Caco-2 (cell line): ENCODE measurements at regions of chr4 and their contacts with region 1.

Region 1: GRCh38 chr4:83034630-83035494 is at the start of gene COPS4:
- DNase-seq: peak; percentile 97 to 98
- H3K4me3 ChIP-seq: peak within 1 kb of the TSS; percentile 80
- H3K4me3 Mint-ChIP-seq: peak within 1 kb of the TSS; percentile 98
- H3K27ac Mint-ChIP-seq: peak within 1 kb of the TSS; percentile 97
- H3K4me1 ChIP-seq: peaks cover 4% of the 10 kb centered on the region; the same call in 1 of the 2 replicates
- H3K4me1 Mint-ChIP-seq: no peaks in the 10 kb centered on the region
- H3K27me3 ChIP-seq: no peaks in the 10 kb centered on the region; the same call in 1 of the 2 replicates
- H3K27me3 Mint-ChIP-seq: no peaks in the 10 kb centered on the region
- CTCF ChIP-seq: peak; percentile 24 to 43
- total RNA-seq, gene COPS4: 34.5 and 36.3 TPM in 2 replicates

Region 2: GRCh38 chr4:82614843-82615449 is 419.9 kb before region 1 on chr4:
- CTCF ChIA-PET with region 1: no interaction called
- POLR2A ChIA-PET with region 1: interaction called, 10 read pairs
- intact Hi-C with region 1: no loop called
- DNase-seq: no peak
- H3K4me3 ChIP-seq: no peak overlapping the region
- H3K4me3 Mint-ChIP-seq: no peak overlapping the region
- H3K27ac Mint-ChIP-seq: no peak overlapping the region
- H3K4me1 ChIP-seq: peaks cover 5% of the 10 kb centered on the region; the same call in 1 of the 2 replicates
- H3K4me1 Mint-ChIP-seq: peaks cover 7% of the 10 kb centered on the region
- H3K27me3 ChIP-seq: no peaks in the 10 kb centered on the region
- H3K27me3 Mint-ChIP-seq: no peaks in the 10 kb centered on the region
- CTCF ChIP-seq: no peak

Region 3: DNA sequence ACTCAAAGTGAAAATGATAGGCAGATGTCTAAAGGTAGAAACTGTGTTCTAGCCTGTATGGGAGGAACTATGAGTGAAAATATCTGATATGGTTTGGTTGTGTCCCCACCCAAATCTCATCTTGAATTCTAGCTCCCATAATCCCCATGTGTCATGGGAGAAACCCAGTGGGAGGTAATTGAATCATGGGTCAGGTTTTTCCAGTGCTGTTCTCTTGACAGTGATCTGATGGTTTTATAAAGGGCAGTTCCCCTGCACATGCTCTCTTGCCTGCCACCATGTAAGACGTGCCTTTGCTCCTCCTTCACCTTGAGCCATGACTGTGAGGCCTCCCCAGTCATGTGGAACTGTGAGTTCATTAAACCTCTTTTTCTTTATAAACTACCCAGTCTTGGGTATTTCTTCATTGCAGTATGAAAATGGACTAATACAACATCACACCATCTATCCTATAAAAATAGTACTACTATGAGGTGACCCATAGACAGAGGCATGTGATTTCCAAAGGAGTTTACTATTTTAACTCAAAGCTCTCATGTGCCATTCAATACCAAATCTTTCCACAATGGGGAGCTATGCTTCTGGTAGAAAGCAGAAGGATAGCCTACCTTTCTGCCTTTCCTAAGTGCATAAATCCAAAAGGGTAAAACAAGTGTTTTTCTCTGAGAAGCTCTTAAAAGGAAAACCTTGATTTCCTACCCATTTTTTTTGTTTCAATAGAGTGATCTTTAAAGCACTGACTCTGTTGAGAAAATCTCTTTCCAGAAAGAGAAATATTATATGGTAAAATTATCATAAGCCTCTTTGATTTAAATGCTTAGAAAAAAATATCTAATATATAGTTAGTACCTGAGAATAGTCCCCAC is 182.7 kb before region 1 on chr4:
- CTCF ChIA-PET with region 1: interaction called, 5 read pairs
- POLR2A ChIA-PET with region 1: no interaction called
- intact Hi-C with region 1: loop called (anchors 5 kb)
- DNase-seq: peak in 1 of 2 experiments; percentile 47
- H3K4me3 ChIP-seq: no peak overlapping the region
- H3K4me3 Mint-ChIP-seq: no peak overlapping the region
- H3K27ac Mint-ChIP-seq: peak overlapping the region; percentile 57
- H3K4me1 ChIP-seq: no peaks in the 10 kb centered on the region
- H3K4me1 Mint-ChIP-seq: no peaks in the 10 kb centered on the region
- H3K27me3 ChIP-seq: no peaks in the 10 kb centered on the region
- H3K27me3 Mint-ChIP-seq: no peaks in the 10 kb centered on the region
- CTCF ChIP-seq: peak; percentile 28 to 60

Region 4: GRCh38 chr4:83054928-83055327 is 20.1 kb after region 1 on chr4:
- CTCF ChIA-PET with region 1: no interaction called
- POLR2A ChIA-PET with region 1: no interaction called
- intact Hi-C with region 1: no loop called
- DNase-seq: no peak
- H3K4me3 ChIP-seq: no peak overlapping the region
- H3K4me3 Mint-ChIP-seq: no peak overlapping the region
- H3K27ac Mint-ChIP-seq: no peak overlapping the region
- H3K4me1 ChIP-seq: no peaks in the 10 kb centered on the region
- H3K4me1 Mint-ChIP-seq: no peaks in the 10 kb centered on the region
- H3K27me3 ChIP-seq: no peaks in the 10 kb centered on the region
- H3K27me3 Mint-ChIP-seq: no peaks in the 10 kb centered on the region
- CTCF ChIP-seq: no peak